CD8-positive, alpha-beta memory T cell (primary cell): ENCODE measurements at regions of chr19 and their contacts with region 1.

Region 1: DNA sequence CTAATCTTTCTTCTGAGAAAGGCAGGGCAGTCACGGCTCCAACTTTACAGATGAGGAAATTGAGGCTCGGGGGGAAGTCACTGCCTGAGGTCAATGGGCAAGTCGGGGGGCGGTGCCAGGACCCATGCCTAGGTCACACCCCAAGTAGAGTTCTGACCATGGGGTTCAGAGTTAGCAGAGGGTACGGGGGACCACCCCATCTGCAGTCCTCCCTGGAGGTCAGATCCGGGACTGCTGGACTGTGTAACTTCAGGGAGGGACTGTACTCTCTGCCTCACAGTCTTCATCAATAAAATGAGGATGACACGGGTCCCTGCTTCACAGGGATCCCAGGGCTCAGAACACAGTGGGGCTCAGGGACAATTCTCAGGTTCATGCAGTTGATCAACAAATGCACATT is 7.7 kb downstream of the SLC5A5 start:
- DNase-seq: no peak
- H3K4me3 ChIP-seq: no peak overlapping the region
- H3K4me3 Mint-ChIP-seq: no peak overlapping the region
- H3K27ac ChIP-seq: no peak overlapping the region
- H3K27ac Mint-ChIP-seq: no peak overlapping the region
- H3K4me1 ChIP-seq: no peaks in the 10 kb centered on the region
- H3K4me1 Mint-ChIP-seq: peaks cover 0 to 3% (median 2%) of the 10 kb centered on the region in 3 donors
- H3K27me3 ChIP-seq: no peaks in the 10 kb centered on the region
- H3K27me3 Mint-ChIP-seq: peaks cover 0 to 1% of the 10 kb centered on the region in 2 donors

Region 2: DNA sequence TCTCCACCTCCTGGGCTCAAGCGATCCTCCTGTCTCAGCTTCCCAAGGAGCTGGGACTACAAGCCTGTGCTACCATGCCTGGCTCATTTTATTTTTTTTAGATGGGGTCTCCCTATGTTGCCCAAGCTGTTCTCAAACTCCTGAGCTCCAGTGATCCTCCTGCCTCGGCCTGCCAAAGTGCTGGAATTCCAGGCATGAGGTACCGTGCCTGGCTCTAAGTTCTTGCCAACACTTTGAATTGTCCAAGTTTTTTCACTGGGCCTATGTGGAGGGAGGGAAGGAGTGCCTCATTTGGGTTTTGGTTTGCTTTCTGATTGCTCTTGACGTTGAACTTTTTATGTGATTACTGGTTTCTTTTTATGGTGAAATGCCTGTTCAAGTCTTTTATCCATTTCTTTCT is 186.9 kb before region 1 on chr19:
- CTCF ChIA-PET with region 1: no interaction called
- POLR2A ChIA-PET with region 1: interaction called, 14 read pairs
- DNase-seq: no peak
- H3K4me3 ChIP-seq: no peak overlapping the region
- H3K4me3 Mint-ChIP-seq: no peak overlapping the region
- H3K27ac ChIP-seq: no peak overlapping the region
- H3K27ac Mint-ChIP-seq: no peak overlapping the region
- H3K4me1 ChIP-seq: no peaks in the 10 kb centered on the region
- H3K4me1 Mint-ChIP-seq: peaks cover 5 to 9% (median 8%) of the 10 kb centered on the region in 3 donors
- H3K27me3 ChIP-seq: peaks cover 26% of the 10 kb centered on the region
- H3K27me3 Mint-ChIP-seq: peaks cover 38 to 57% of the 10 kb centered on the region in 2 donors